Activated CD4-positive, alpha-beta T cell treated with anti-CD3 and anti-CD28 coated beads for 36 hours (primary cell): ENCODE measurements at regions of chr15 and their contacts with region 1.

Region 1: DNA sequence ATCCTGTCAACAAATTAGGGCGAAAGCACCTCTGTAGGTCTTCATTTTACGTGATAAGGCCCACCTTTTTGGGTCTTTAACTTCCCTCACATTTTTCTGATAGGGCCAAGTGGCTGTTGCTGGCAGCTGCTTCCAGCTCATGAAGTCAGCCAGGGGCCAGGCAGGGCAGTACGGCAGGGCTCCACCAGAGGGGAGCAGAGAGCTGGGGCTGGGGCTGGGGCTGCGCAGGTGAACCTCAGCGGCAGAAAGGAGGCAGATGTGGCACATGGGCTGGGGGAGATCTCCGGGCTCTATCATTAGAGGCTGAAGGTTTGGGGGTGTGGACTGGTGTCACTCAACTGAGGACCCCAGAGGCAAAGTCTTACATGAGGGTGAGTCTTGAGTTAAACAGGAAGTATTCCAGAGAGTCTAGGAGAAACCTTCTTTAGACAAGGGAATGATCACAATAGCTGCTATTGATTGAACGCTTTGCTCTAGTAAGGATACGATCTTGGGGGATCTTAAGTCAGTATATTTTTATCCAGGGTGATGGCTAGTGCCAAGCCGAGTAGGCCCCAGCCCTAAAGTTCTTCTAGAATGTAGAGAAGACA is 62.8 kb upstream of the MEX3B start:
- DNase-seq: peak; percentile 87
- ATAC-seq: peak; percentile 99
- H3K4me3 Mint-ChIP-seq: no peak overlapping the region
- H3K27ac Mint-ChIP-seq: no peak overlapping the region
- H3K4me1 Mint-ChIP-seq: no peaks in the 10 kb centered on the region
- H3K27me3 Mint-ChIP-seq: no peaks in the 10 kb centered on the region

Region 2: DNA sequence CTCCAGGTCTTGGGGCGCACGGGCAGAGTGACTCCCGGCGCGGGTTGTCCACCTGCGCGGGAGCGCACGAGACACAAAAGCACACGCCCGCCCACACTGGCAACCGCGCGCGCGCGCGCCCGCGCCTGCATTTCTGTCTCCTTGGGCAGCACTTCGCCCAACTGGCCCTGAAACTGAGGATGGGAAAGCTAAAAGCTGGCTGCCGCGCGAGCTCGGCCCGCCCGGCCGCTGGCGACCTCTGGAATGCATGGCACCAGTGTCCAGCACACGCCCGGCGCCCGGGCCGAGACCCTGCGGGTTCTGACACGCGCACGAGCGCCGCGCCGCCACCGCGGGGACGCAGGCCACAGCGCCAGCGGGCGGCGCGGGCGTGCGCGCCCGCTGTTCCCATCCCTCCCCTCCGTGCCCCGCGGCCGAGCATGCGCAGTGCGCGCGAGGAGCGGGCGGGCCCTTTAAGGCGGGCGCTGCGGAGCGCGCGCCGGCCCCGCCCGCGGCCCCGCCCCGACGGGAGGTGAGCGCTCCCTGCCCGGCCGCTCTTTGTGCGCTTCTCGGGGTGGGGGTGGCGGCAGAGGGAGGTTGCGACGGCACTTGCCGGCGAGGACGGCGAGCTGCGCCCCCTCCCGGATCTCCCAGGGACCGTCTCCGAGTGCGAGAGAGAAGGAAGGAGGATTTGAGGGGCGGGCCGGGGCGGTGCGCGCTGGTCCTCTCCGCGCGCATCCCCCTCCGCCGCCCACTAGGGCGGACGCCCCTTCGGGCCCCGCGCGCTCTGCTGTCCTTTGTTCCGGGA is 61.7 kb before region 1 on chr15:
- CTCF ChIA-PET with region 1: no interaction called
- POLR2A ChIA-PET with region 1: no interaction called
- intact Hi-C with region 1: no loop called
- DNase-seq: peak; percentile 95
- ATAC-seq: peak; percentile 77
- H3K4me3 Mint-ChIP-seq: peak overlapping the region; percentile 81
- H3K27ac Mint-ChIP-seq: peak overlapping the region; percentile 85
- H3K4me1 Mint-ChIP-seq: peaks cover 12% of the 10 kb centered on the region
- H3K27me3 Mint-ChIP-seq: peaks cover 21% of the 10 kb centered on the region

Region 3: GRCh38 chr15:82139823-82140268 is 31.3 kb after region 1 on chr15:
- CTCF ChIA-PET with region 1: interaction called, 3 read pairs
- POLR2A ChIA-PET with region 1: no interaction called
- intact Hi-C with region 1: loop called in 1 of 2 experiments (anchors 2 kb)
- DNase-seq: no peak
- ATAC-seq: no peak
- H3K4me3 Mint-ChIP-seq: no peak overlapping the region
- H3K27ac Mint-ChIP-seq: peak overlapping the region; percentile 7
- H3K4me1 Mint-ChIP-seq: peaks cover 12% of the 10 kb centered on the region
- H3K27me3 Mint-ChIP-seq: no peaks in the 10 kb centered on the region

Region 4: GRCh38 chr15:82197733-82198594 is 89.4 kb after region 1 on chr15:
- CTCF ChIA-PET with region 1: interaction called, 9 read pairs
- POLR2A ChIA-PET with region 1: no interaction called
- intact Hi-C with region 1: loop called (anchors 1 to 5 kb)
- DNase-seq: peak; percentile 75
- ATAC-seq: peak; percentile 80
- H3K4me3 Mint-ChIP-seq: no peak overlapping the region
- H3K27ac Mint-ChIP-seq: no peak overlapping the region
- H3K4me1 Mint-ChIP-seq: no peaks in the 10 kb centered on the region
- H3K27me3 Mint-ChIP-seq: no peaks in the 10 kb centered on the region